Natural killer cell (primary cell): ENCODE measurements at regions of chr9 and their contacts with region 1.

Region 1: GRCh38 chr9:4984621-4985385 is at the start of gene JAK2:
- DNase-seq: peak; percentile 75 to 88
- ATAC-seq: peak; percentile 80 to 92 (median 85)
- H3K4me3 ChIP-seq: peak within 1 kb of the TSS; percentile 67
- H3K4me3 Mint-ChIP-seq: peak within 1 kb of the TSS; percentile 98
- H3K27ac ChIP-seq: peak within 1 kb of the TSS; percentile 79
- H3K27ac Mint-ChIP-seq: peak within 1 kb of the TSS; percentile 85 to 90
- H3K4me1 ChIP-seq: peaks cover 28% of the 10 kb centered on the region
- H3K4me1 Mint-ChIP-seq: peaks cover 27 to 39% of the 10 kb centered on the region in 2 donors
- H3K27me3 ChIP-seq: no peaks in the 10 kb centered on the region
- H3K27me3 Mint-ChIP-seq: peaks cover 0 to 8% of the 10 kb centered on the region in 2 donors
- CTCF ChIP-seq: peak; percentile 22
- total RNA-seq, gene JAK2: 20.8 to 43.9 (median 30.0) TPM

Region 2: DNA sequence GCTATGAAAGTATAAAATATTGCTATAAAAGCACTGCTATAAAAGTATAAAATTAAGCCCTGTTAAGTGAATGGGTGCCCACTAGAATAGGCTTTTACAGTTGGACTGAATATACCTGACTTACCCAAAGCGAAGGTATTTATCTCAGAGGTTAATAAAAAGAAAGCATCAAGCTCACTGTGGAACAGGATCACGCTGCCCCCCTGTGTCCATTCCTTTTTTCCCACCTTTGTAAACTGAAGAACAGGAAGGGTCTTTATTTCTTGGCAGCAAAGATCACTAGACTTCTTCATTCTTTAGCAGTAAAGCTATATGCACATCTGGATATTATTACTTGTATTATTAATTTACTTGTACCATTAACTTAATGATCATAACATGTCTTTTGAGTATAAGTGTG is 344.8 kb before region 1 on chr9:
- intact Hi-C with region 1: no loop called
- DNase-seq: peak in 1 of 2 donors; percentile 76
- ATAC-seq: no peak
- H3K4me3 ChIP-seq: no peak overlapping the region
- H3K4me3 Mint-ChIP-seq: no peak overlapping the region
- H3K27ac ChIP-seq: no peak overlapping the region
- H3K27ac Mint-ChIP-seq: no peak overlapping the region
- H3K4me1 ChIP-seq: no peaks in the 10 kb centered on the region
- H3K4me1 Mint-ChIP-seq: peaks cover 0 to 5% of the 10 kb centered on the region in 2 donors
- H3K27me3 ChIP-seq: no peaks in the 10 kb centered on the region
- H3K27me3 Mint-ChIP-seq: peaks cover 14 to 24% of the 10 kb centered on the region in 2 donors
- CTCF ChIP-seq: no peak

Region 3: DNA sequence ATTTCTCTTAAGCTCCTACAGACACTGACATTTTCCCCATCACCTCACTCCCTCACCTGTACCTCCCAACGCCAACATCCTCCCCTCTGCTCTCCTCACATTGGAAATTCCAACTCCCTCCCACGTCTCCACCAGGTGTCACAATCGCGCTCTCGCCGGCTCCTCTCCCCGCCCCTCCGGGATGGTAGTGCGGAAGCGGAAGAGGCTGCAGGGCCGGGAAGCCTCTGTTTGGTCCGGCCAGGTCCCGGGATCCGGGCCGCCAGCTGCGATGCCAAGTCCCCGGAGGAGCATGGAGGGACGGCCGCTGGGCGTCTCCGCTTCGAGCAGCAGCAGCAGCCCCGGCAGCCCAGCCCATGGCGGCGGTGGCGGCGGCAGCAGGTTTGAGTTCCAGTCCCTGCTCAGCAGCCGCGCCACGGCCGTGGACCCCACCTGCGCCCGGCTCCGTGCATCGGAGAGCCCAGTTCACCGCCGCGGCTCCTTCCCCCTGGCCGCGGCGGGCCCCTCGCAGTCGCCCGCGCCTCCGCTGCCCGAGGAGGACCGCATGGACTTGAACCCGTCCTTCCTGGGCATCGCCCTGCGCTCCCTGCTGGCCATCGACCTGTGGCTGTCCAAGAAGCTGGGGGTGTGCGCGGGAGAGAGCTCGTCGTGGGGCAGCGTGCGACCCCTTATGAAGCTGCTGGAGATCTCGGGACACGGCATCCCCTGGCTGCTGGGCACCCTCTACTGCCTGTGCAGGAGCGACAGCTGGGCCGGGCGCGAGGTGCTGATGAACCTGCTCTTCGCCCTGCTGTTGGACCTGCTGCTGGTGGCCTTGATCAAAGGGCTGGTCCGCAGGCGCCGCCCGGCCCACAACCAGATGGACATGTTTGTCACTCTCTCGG is 322.5 kb before region 1 on chr9 and contains the start of gene PLPP6:
- intact Hi-C with region 1: loop called (anchors 10 kb)
- DNase-seq: peak; percentile 66 to 92
- ATAC-seq: peak; percentile 78 to 89 (median 87)
- H3K4me3 ChIP-seq: peak within 1 kb of the TSS; percentile 57
- H3K4me3 Mint-ChIP-seq: peak within 1 kb of the TSS; percentile 98
- H3K27ac ChIP-seq: peak within 1 kb of the TSS; percentile 80
- H3K27ac Mint-ChIP-seq: peak within 1 kb of the TSS; percentile 88 to 91
- H3K4me1 ChIP-seq: peaks cover 22% of the 10 kb centered on the region
- H3K4me1 Mint-ChIP-seq: peaks cover 54 to 60% of the 10 kb centered on the region in 2 donors
- H3K27me3 ChIP-seq: no peaks in the 10 kb centered on the region
- H3K27me3 Mint-ChIP-seq: peaks cover 0 to 5% of the 10 kb centered on the region in 2 donors
- CTCF ChIP-seq: peak; percentile 53
- total RNA-seq, gene PLPP6: 3.7 to 5.6 (median 3.8) TPM

Region 4: DNA sequence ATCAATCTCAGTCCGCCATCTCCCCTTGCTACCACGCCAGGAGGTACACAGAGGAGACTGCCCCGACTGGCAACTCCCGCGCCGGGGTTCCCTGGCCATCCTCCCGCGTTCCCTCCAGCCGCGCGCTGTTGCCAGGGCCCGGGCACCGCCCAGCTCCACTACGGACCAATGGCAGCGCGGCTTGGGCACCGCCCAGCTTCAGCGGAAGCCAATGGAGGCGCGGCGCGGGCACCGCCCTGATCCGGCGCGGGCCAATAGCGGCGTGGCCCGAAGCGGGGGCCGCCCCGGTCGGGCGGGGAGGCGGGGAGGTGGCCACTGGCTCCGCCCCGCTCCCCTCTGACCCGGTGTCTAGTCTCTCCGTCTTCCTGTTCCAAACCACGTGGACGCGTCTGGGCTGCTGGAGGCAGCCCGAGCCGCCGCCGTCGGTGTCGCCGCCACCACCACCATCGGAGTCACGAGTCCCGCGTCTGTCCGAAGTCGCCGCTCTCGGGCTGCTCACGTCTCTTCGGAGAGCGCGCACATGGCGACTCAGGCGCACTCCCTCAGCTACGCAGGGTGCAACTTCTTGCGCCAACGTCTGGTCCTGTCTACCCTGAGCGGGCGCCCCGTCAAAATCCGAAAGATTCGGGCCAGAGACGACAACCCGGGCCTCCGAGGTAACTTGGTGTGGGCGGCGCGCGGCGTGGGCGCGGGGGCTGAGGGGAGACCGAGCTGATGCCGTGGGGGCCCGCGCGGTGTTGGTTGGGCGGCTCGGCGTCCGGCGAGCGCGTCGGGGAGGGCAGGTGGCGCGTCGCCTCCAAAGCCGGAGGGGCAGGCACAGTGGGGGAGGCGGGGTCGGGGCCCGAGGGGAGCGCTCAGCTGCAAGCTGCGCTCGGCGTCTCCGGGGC is 192.0 kb before region 1 on chr9 and contains the start of gene RCL1:
- intact Hi-C with region 1: loop called (anchors 1 kb)
- DNase-seq: peak; percentile 97 to 98
- ATAC-seq: peak; percentile 92 to 99 (median 92)
- H3K4me3 ChIP-seq: peak within 1 kb of the TSS; percentile 81
- H3K4me3 Mint-ChIP-seq: peak within 1 kb of the TSS; percentile 94
- H3K27ac ChIP-seq: peak within 1 kb of the TSS; percentile 81
- H3K27ac Mint-ChIP-seq: peak within 1 kb of the TSS; percentile 89
- H3K4me1 ChIP-seq: peaks cover 21% of the 10 kb centered on the region
- H3K4me1 Mint-ChIP-seq: peaks cover 29 to 31% of the 10 kb centered on the region in 2 donors
- H3K27me3 ChIP-seq: no peaks in the 10 kb centered on the region
- H3K27me3 Mint-ChIP-seq: peaks cover 5 to 27% of the 10 kb centered on the region in 2 donors
- CTCF ChIP-seq: no peak
- total RNA-seq, gene RCL1: 18.1 to 26.3 (median 23.0) TPM

Region 5: GRCh38 chr9:5437254-5438216 is 452.7 kb after region 1 on chr9 and contains the start of gene PLGRKT:
- intact Hi-C with region 1: loop called (anchors 5 kb)
- DNase-seq: peak; percentile 85 to 96
- ATAC-seq: peak; percentile 93 to 98 (median 96)
- H3K4me3 ChIP-seq: peak within 1 kb of the TSS; percentile 66
- H3K4me3 Mint-ChIP-seq: peak within 1 kb of the TSS; percentile 92
- H3K27ac ChIP-seq: peak within 1 kb of the TSS; percentile 91
- H3K27ac Mint-ChIP-seq: peak within 1 kb of the TSS; percentile 96 to 97
- H3K4me1 ChIP-seq: peaks cover 18% of the 10 kb centered on the region
- H3K4me1 Mint-ChIP-seq: peaks cover 24 to 27% of the 10 kb centered on the region in 2 donors
- H3K27me3 ChIP-seq: no peaks in the 10 kb centered on the region
- H3K27me3 Mint-ChIP-seq: no peaks in the 10 kb centered on the region
- CTCF ChIP-seq: no peak
- total RNA-seq, gene PLGRKT: 14.7 to 17.8 (median 17.3) TPM

Region 6: DNA sequence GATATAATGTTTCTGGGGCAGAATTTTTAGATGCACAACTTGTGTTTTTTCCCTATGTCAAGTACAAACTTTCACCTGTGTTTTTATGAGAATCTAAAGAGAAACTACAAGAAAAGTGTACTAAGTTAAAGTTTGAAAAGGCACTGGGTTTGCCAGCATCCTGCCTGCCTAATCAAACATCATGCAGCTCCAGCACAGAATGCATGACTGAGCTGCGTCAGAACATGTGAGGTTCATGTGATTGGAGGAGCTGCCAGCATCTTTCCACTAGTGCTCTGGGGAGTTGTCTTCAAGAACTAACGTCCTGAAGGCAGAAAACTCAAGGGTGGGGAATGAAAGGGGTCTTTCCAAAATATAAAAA is 598.0 kb after region 1 on chr9:
- intact Hi-C with region 1: no loop called
- DNase-seq: peak in 1 of 2 donors; percentile 65
- ATAC-seq: no peak
- H3K4me3 ChIP-seq: no peak overlapping the region
- H3K4me3 Mint-ChIP-seq: no peak overlapping the region
- H3K27ac ChIP-seq: no peak overlapping the region
- H3K27ac Mint-ChIP-seq: no peak overlapping the region
- H3K4me1 ChIP-seq: peaks cover 3% of the 10 kb centered on the region
- H3K4me1 Mint-ChIP-seq: peaks cover 0 to 17% of the 10 kb centered on the region in 2 donors
- H3K27me3 ChIP-seq: no peaks in the 10 kb centered on the region
- H3K27me3 Mint-ChIP-seq: peaks cover 0 to 2% of the 10 kb centered on the region in 2 donors
- CTCF ChIP-seq: no peak